ENCODE measurements at regions of chr9 and their contacts with region 1.

Region 1: DNA sequence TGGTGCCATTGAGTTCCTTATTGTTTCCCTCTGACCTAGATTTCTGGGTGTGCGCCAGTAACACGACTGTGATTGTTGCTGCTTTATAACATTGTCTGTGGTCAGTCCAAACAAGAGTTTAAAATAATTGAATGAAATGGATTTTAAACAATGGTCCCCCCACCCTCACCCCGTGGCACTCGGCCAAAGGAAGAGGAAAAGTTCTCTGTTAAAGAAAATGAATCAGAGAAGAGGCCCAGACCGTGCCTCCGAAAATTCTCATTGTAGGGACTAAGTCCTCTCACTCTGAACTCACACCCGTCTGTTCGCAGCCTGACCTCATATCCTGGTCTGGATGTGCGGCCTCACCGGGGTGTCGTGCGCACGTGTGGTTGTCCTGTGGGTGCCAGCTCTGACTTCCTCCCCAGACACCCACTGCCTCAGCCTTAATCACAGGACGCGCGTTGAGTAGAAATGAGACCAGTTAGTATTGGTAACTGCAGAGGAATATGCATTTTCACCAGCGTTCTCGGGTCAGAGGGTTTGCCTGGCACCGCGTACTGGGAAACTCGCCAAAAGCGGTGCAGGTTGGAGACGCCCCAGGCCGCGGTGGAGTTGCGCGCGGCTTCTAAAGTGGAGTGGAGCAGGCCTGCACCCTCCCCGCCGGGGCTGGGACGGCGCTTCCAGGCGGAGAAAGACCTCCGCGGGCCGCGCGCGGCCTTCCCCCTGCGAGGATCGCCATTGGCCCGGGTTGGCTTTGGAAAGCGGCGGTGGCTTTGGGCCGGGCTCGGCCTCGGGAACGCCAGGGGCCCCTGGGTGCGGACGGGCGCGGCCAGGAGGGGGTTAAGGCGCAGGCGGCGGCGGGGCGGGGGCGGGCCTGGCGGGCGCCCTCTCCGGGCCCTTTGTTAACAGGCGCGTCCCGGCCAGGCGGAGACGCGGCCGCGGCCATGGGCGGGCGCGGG is at the start of gene ABL1:
- DNase-seq: peak; percentile 58
- H3K4me3 Mint-ChIP-seq: peak within 1 kb of the TSS; percentile 97
- H3K27ac Mint-ChIP-seq: peak within 1 kb of the TSS; percentile 98
- H3K4me1 Mint-ChIP-seq: peaks cover 25% of the 10 kb centered on the region
- H3K27me3 Mint-ChIP-seq: no peaks in the 10 kb centered on the region
- CTCF ChIP-seq: no peak
- total RNA-seq, gene ABL1: 29.6 and 30.0 TPM in 2 replicates

Region 2: DNA sequence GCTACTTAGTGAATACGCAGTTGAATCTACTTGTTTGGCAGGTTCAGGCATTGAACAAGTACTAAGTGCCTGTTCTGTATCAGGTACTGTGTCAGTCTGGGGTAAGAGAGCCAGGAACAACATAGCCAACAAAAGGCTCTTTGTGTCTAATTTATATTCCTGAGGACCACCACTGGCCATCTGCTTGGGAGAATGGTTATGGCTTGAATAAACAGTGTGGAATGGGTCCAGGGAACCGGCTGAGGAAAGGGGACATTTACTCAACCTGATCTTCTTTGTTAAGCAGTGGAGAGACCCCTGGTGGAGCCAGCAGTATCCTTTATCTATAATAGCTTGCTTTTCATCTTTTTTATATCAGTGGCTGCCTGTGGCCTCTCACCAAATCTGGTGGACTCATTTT is 102.5 kb before region 1 on chr9:
- CTCF ChIA-PET with region 1: no interaction called
- intact Hi-C with region 1: loop called (anchors 10 kb)
- DNase-seq: no peak
- H3K4me3 Mint-ChIP-seq: no peak overlapping the region
- H3K27ac Mint-ChIP-seq: peak overlapping the region; percentile 3
- H3K4me1 Mint-ChIP-seq: peaks cover 34% of the 10 kb centered on the region
- H3K27me3 Mint-ChIP-seq: no peaks in the 10 kb centered on the region
- CTCF ChIP-seq: no peak

Region 3: GRCh38 chr9:130806327-130806716 is 28.3 kb before region 1 on chr9:
- CTCF ChIA-PET with region 1: no interaction called
- intact Hi-C with region 1: no loop called
- DNase-seq: no peak
- H3K4me3 Mint-ChIP-seq: no peak overlapping the region
- H3K27ac Mint-ChIP-seq: no peak overlapping the region
- H3K4me1 Mint-ChIP-seq: no peaks in the 10 kb centered on the region
- H3K27me3 Mint-ChIP-seq: no peaks in the 10 kb centered on the region
- CTCF ChIP-seq: no peak